Common myeloid progenitor, CD34-positive (primary cell): ENCODE measurements at regions of chr17 and their contacts with region 1.

Region 1: DNA sequence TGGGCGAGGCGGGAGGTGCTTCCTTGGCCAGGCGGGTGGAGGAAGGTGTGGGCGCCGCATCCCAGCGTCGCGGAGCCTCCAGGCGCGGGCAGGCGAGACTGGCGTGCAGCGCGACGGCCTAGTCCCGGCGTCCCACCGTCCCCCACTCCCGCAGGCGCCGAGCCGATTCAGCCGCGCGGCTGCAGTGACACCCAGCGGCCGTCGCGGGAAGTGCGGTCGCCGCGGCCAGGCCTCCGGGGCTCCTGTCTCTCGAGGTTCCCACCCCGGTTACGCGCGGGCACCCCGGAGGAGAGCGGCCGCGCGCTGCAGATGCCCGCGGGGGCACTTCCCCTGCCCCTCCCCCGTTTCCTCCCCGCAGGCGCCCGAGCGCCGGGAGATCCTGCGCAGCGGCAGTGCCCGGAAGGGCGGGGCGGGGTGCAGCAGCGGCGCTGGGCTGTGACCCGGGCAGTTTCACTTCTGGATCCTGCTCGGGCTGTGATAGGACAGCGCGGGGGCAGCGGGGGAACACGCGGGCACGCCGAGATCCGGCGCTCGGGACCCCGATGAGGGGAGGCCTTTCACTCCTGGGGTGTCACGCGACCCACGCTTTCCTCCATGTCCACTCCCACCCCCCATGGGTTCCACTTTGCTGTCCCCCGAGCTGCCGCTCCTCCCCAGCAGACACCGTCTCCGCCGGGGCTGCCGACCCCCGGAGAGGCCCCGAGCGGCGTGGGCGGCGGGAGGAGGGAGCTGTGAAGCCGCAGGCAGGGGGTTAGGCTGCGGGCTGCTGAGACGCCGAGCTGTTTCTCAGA is 16.6 kb downstream of the GRB7 start:
- DNase-seq: peak; percentile 84 to 95 (median 92)
- H3K4me3 ChIP-seq: peak overlapping the region; percentile 36 to 74 (median 63)
- H3K27ac ChIP-seq: peak overlapping the region; percentile 7 to 58
- H3K4me1 ChIP-seq: peaks cover 9 to 52% (median 45%) of the 10 kb centered on the region in 4 experiments
- H3K27me3 ChIP-seq: peaks cover 0 to 3% (median 0%) of the 10 kb centered on the region in 5 experiments

Region 2: GRCh38 chr17:39687811-39688518 is 66.4 kb before region 1 on chr17 and contains the start of gene PGAP3:
- CTCF ChIA-PET with region 1: no interaction called
- POLR2A ChIA-PET with region 1: no interaction called
- DNase-seq: peak; percentile 94 to 96 (median 94)
- H3K4me3 ChIP-seq: peak within 1 kb of the TSS; percentile 36 to 96 (median 86)
- H3K27ac ChIP-seq: peak within 1 kb of the TSS; percentile 46 to 78
- H3K4me1 ChIP-seq: peaks cover 7 to 18% (median 9%) of the 10 kb centered on the region in 4 experiments
- H3K27me3 ChIP-seq: no peaks in the 10 kb centered on the region

Region 3: DNA sequence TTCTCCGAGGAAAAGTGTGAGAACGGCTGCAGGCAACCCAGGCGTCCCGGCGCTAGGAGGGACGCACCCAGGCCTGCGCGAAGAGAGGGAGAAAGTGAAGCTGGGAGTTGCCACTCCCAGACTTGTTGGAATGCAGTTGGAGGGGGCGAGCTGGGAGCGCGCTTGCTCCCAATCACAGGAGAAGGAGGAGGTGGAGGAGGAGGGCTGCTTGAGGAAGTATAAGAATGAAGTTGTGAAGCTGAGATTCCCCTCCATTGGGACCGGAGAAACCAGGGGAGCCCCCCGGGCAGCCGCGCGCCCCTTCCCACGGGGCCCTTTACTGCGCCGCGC is 54.6 kb before region 1 on chr17 and contains the start of gene ERBB2:
- CTCF ChIA-PET with region 1: no interaction called
- POLR2A ChIA-PET with region 1: no interaction called
- DNase-seq: no peak
- H3K4me3 ChIP-seq: peak within 1 kb of the TSS in 4 of 7 experiments; percentile 6 to 63 (median 52)
- H3K27ac ChIP-seq: no peak within 1 kb of the TSS
- H3K4me1 ChIP-seq: peaks cover 0 to 11% (median 8%) of the 10 kb centered on the region in 4 experiments
- H3K27me3 ChIP-seq: peaks cover 0 to 40% (median 14%) of the 10 kb centered on the region in 5 experiments

Region 4: DNA sequence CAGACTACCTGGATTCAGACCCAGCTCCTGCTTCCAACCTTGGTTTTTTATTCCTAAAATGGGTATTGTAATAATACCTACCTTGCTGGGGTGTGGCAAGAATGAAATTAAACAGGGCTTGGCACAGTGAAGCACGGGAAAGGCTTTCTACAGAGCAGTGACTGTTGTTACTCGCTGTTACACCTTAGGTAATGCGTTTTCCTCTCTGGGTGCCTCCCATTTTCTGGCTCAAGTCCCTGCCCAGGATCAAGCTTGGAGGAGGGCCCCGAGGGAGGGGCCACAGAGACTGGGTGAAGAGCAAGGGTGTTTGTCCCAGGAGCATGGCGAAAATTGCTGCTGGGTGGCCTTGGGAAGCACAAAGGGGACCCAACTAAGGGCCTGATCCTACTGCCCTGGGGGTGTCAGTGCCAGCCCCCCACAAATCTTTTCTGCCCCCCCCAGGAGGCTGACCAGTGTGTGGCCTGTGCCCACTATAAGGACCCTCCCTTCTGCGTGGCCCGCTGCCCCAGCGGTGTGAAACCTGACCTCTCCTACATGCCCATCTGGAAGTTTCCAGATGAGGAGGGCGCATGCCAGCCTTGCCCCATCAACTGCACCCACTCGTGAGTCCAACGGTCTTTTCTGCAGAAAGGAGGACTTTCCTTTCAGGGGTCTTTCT is 37.3 kb before region 1 on chr17:
- CTCF ChIA-PET with region 1: no interaction called
- POLR2A ChIA-PET with region 1: no interaction called
- DNase-seq: no peak
- H3K4me3 ChIP-seq: no peak overlapping the region
- H3K27ac ChIP-seq: no peak overlapping the region
- H3K4me1 ChIP-seq: no peaks in the 10 kb centered on the region
- H3K27me3 ChIP-seq: no peaks in the 10 kb centered on the region

Region 5: DNA sequence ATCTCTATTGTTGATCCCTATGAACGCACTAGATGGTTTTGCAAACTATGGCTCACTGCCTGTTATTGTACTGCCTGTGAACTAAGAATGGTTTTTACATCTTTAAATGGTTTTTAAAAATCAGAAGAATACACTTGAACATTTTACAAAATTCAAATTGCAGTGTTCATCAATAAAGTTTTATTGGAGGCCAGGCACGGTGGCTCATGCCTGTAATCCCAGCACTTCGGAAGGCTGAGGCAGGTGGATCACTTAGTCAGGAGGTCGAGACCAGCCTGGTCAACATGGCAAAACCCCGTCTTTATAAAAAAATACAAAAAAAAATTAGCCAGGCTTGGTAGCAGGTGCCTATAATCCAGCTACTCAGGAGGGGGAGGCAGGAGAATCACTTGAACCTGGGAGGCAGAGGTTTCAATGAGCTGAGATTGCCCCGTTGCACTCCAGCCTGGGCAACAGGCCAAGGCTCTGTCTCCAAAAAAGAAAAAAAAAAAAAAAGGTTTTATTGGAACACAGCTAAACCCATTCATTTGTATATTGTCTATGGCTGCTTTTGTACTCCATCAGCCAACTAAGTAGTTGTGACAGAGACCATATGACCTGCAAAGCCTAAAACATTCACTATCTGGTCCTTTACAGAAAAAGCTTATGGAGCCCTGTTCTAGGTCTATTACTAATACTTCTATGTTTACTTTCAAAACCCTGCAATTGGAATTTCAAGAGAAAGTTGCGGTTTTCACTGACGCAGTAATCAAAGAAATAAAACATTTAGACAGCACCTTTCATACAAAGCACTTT is 90.9 kb after region 1 on chr17:
- CTCF ChIA-PET with region 1: no interaction called
- POLR2A ChIA-PET with region 1: interaction called, 10 read pairs
- DNase-seq: no peak
- H3K4me3 ChIP-seq: no peak overlapping the region
- H3K27ac ChIP-seq: no peak overlapping the region
- H3K4me1 ChIP-seq: no peaks in the 10 kb centered on the region
- H3K27me3 ChIP-seq: peaks cover 0 to 12% (median 3%) of the 10 kb centered on the region in 5 experiments